Sigmoid colon (tissue), 7 donors: ENCODE measurements at regions of chr4 and their contacts with region 1.

Region 1: GRCh38 chr4:141636082-141636770 is at the start of gene IL15:
- DNase-seq: peak; percentile 79
- H3K4me3 ChIP-seq: peak within 1 kb of the TSS; percentile 60 to 96 (median 68)
- H3K27ac ChIP-seq: peak within 1 kb of the TSS; percentile 76 to 87 (median 83)
- H3K4me1 ChIP-seq: peaks cover 0 to 37% (median 20%) of the 10 kb centered on the region in 4 donors
- H3K27me3 ChIP-seq: no peaks in the 10 kb centered on the region
- CTCF ChIP-seq: no peak
- EP300 ChIP-seq: no peak
- POLR2A ChIP-seq: no peak
- total RNA-seq, gene IL15: 5.9 to 16.1 (median 8.8) TPM

Region 2: DNA sequence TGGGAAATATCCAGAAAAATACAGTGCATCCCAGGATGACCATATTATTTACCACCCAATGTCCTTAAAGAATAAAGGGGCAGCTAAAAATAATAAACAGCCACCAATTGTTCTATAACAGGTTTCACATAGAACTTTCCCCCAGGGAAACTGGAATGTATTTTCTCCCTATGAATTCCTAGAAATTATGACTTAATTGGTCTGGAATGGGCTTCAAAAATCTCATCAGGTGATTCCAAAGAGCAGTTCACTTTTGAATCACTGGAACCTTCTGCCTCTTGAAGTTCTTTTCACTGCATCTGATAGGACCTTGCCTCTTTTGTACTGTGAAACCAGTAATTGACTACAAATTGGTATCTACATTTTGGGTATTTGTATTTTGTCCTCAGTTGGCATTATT is 296.3 kb before region 1 on chr4:
- intact Hi-C with region 1: loop called (anchors 10 kb)
- DNase-seq: no peak
- H3K4me3 ChIP-seq: no peak overlapping the region
- H3K27ac ChIP-seq: no peak overlapping the region
- H3K4me1 ChIP-seq: peaks cover 0 to 7% (median 0%) of the 10 kb centered on the region in 4 donors
- H3K27me3 ChIP-seq: no peaks in the 10 kb centered on the region
- CTCF ChIP-seq: no peak
- EP300 ChIP-seq: no peak
- POLR2A ChIP-seq: no peak